ENCODE measurements at regions of chr20 and their contacts with region 1.

Region 1: GRCh38 chr20:58179432-58180099 is 48.9 kb downstream of the ANKRD60 start:
- DNase-seq: peak; percentile 78

Region 2: GRCh38 chr20:57622579-57623377 is 556.8 kb before region 1 on chr20:
- intact Hi-C with region 1: loop called (anchors 10 kb)
- DNase-seq: no peak

Measured in cardiac septum (tissue), 1 donor.